Activated CD4-positive, alpha-beta memory T cell treated with anti-CD3 and anti-CD28 coated beads for 36 hours (primary cell): ENCODE measurements at regions of chr3 and their contacts with region 1.

Region 1: DNA sequence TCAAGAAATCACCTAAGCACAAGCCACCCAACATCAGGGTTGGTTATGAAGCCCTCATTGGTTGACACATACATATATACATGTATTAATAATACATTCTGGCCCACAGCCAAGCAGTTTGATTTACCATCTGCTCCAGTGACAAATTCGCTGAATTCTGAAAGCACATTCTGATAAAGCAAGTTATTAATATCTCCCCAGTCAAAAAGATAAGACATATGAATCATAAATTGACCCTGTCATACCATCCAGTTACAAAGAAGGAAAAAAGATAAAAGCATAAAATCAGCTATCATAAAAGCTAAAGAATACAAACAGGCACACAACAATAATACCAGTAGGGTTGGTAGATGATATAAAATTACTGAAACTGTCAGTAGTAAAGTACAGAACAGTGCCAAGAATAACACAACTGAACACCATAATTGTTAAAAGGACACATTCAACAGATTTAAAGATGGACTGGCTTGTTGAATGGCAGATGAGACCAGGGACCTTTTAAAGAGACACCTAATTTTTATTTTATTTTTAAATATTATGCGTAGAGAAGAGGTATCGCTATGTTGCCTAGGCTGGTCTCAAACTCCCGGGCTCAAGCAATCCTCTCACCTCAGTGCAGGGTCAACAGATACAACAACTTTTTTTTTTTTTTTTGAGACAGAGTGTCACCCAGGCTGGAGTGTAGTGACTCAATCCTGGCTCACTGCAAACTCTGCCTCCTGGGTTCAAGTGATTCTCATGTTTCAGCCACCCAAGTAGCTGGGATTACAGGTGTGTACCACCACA is 7.7 kb downstream of the SNX4 start:
- DNase-seq: peak; percentile 67
- H3K4me3 Mint-ChIP-seq: no peak overlapping the region
- H3K27ac Mint-ChIP-seq: peak overlapping the region; percentile 83
- H3K4me1 Mint-ChIP-seq: peaks cover 48% of the 10 kb centered on the region
- H3K27me3 Mint-ChIP-seq: no peaks in the 10 kb centered on the region

Region 2: DNA sequence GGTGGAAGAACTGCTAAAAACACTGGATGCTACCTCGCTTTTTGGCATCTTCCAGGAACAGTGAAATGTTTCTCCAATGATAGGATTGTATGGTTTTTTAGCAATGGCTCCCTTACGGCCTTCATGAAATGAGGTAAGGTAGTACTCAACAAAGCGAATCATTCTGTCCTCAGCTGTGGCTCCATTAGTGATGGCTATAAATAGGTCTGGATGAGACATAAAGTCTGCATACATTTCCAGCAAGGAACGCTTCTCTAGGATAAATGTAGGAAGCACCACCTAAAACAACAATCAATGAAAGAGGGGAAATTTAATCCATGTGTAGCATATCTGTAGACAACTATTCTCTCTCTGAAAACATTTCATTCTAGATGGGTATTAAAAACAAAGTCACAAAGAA is 40.1 kb after region 1 on chr3:
- CTCF ChIA-PET with region 1: no interaction called
- POLR2A ChIA-PET with region 1: no interaction called
- intact Hi-C with region 1: loop called (anchors 1 kb)
- DNase-seq: no peak
- H3K4me3 Mint-ChIP-seq: no peak overlapping the region
- H3K27ac Mint-ChIP-seq: no peak overlapping the region
- H3K4me1 Mint-ChIP-seq: peaks cover 18% of the 10 kb centered on the region
- H3K27me3 Mint-ChIP-seq: no peaks in the 10 kb centered on the region